Activated B cell treated with CpG ODN at 0.5 μM for 24 hours (primary cell): ENCODE measurements at regions of chr1 and their contacts with region 1.

Region 1: DNA sequence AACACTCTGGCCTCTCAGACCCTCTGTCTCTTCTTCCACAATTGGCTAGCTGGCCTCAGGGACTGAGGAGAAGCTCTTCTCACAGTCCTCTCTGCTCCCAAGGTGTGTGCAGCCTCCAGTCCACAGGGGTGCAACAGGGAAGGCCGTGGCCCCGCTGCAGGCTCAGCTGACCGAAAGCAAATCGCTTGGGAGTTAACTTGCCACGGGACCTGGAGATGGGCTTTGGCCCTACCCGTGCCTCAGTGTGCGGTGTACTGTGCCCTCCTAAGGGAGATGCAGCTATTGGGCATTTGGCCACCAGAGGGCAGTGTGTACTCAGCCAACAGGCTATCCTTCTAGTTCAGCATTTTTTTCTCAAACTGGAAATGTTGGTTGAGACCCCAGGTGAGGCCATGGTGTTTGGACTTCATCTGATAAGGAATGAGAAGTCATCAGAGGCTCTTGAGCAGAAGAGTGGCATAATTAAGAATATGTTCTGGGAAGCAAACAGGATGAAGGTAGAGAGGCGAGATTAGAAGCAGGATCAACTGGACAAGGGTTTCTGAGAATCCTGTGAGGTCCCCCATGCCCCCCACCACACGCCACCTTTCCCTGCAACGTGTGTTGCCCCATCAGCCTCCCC is 42.5 kb upstream of the TMEM125 start:
- DNase-seq: peak; percentile 76
- ATAC-seq: peak; percentile 96
- H3K4me3 Mint-ChIP-seq: no peak overlapping the region
- H3K27ac Mint-ChIP-seq: no peak overlapping the region
- H3K4me1 Mint-ChIP-seq: peaks cover 12% of the 10 kb centered on the region
- H3K27me3 Mint-ChIP-seq: no peaks in the 10 kb centered on the region
- CTCF ChIP-seq: peak; percentile 47

Region 2: DNA sequence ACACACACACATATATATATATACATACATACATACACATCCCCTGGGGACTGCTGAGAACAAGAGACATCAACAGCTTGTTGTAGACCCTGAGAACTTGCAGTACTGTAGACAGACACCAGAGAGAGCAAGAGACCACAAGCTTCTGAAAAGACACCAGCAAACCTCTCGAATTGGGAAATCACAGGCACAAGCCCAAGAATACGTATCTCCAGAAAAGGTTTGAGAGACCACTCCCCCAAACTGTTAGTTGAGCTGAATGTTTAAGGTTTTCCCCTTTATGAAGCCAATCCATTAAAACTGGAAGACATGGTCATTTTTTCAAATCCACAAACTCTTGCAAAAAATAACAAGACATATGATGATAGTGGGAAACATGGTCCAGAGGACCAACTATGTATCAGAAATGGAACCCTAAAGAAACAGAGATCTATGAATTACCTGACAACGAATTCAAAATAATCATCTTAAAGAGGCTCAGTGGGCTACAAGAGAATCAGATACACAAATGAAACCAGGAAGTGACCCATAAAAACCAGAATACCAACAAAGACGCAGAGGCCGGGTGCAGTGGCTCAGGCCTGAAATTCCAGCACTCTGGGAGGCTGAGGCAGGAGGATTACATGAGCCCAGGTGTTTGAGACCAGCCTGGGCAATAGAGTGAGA is 313.7 kb before region 1 on chr1:
- CTCF ChIA-PET with region 1: interaction called, 10 read pairs
- POLR2A ChIA-PET with region 1: no interaction called
- intact Hi-C with region 1: no loop called
- DNase-seq: no peak
- ATAC-seq: peak; percentile 99
- H3K4me3 Mint-ChIP-seq: no peak overlapping the region
- H3K27ac Mint-ChIP-seq: no peak overlapping the region
- H3K4me1 Mint-ChIP-seq: peaks cover 6% of the 10 kb centered on the region
- H3K27me3 Mint-ChIP-seq: no peaks in the 10 kb centered on the region
- CTCF ChIP-seq: peak; percentile 55

Region 3: DNA sequence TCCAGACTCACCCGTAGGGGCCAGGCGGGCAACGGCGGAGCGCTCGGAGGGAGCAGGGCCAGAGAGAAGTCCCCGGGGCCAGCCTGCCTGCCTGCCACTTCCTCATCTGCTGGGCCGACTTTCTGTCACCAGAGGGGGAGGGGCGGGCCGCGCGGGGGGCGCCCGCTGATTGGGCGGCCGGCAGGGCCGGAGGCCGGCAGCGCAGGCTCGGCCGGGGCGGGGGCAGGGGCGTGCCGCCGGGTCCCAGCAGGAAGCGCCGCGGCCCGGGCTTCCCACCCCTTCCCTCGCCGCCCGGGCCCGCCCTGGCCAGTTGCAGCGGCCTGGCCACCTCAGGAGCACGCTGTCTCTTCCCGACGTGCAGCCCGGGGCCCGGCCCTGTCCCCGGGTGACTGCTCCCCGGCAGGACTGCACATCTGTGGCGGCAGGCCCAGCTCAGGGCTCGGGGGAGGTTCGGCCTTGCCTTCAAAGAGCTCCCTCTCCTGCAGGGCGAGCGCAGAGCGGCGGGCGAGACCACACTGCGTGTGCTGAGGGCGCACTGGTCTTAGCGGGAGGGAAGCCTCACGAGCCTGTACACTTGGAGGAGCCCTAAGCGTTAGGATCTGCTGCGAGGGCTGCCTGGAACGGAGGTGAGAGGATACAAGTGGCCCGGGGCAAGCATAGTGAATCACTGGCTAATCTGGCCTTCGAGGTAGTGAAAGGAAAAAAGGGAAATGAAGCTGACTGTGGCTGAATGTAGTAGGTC is 140.8 kb after region 1 on chr1 and contains the start of gene ELOVL1:
- CTCF ChIA-PET with region 1: interaction called, 7 read pairs
- POLR2A ChIA-PET with region 1: interaction called, 6 read pairs
- intact Hi-C with region 1: loop called (anchors 1 kb)
- DNase-seq: peak; percentile 92
- ATAC-seq: peak; percentile 87
- H3K4me3 Mint-ChIP-seq: peak within 1 kb of the TSS; percentile 93
- H3K27ac Mint-ChIP-seq: peak within 1 kb of the TSS; percentile 97
- H3K4me1 Mint-ChIP-seq: peaks cover 42% of the 10 kb centered on the region
- H3K27me3 Mint-ChIP-seq: no peaks in the 10 kb centered on the region
- CTCF ChIP-seq: no peak
- total RNA-seq, gene ELOVL1: 80.2 and 84.2 TPM in 2 replicates

Region 4: DNA sequence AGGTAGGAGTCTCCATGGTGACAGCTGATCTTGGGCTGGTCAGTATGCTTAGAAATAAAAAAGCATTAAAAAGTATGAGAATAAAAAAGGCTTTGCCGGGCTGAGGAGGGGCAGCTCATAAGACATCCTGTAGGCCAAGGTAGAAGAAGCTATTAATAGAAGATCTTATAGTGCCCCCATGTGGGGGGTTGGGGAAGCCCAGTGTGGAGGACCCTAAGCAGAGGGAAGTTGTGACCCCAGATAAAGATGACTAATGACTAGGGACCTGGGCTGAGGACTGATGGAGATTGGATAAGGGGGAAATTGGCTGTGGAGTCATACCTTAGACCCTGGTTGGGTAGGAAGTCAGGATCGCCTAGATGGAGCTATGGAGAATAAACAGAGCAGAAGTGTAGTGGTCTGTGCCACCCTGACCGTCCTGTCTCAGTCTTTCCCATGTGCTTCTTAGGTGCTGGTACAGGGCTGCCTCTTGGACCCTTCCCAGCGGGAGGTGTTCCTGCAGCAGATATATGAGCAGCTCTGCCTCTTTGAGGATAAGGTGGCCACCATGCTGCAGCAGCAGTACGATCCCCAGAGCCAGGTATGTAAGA is 187.5 kb after region 1 on chr1:
- CTCF ChIA-PET with region 1: interaction called, 147 read pairs
- POLR2A ChIA-PET with region 1: interaction called, 14 read pairs
- intact Hi-C with region 1: loop called (anchors 1 kb)
- DNase-seq: peak; percentile 31
- ATAC-seq: peak; percentile 96
- H3K4me3 Mint-ChIP-seq: no peak overlapping the region
- H3K27ac Mint-ChIP-seq: no peak overlapping the region
- H3K4me1 Mint-ChIP-seq: no peaks in the 10 kb centered on the region
- H3K27me3 Mint-ChIP-seq: no peaks in the 10 kb centered on the region
- CTCF ChIP-seq: peak; percentile 19

Region 5: GRCh38 chr1:43650310-43651085 is 423.2 kb after region 1 on chr1:
- CTCF ChIA-PET with region 1: interaction called, 7 read pairs
- POLR2A ChIA-PET with region 1: interaction called, 3 read pairs
- intact Hi-C with region 1: loop called (anchors 5 kb)
- DNase-seq: peak; percentile 82
- ATAC-seq: peak; percentile 75
- H3K4me3 Mint-ChIP-seq: peak overlapping the region; percentile 98
- H3K27ac Mint-ChIP-seq: peak overlapping the region; percentile 97
- H3K4me1 Mint-ChIP-seq: peaks cover 46% of the 10 kb centered on the region
- H3K27me3 Mint-ChIP-seq: peaks cover 2% of the 10 kb centered on the region
- CTCF ChIP-seq: no peak

Region 6: GRCh38 chr1:43763497-43763973 is 536.3 kb after region 1 on chr1:
- CTCF ChIA-PET with region 1: interaction called, 3 read pairs
- POLR2A ChIA-PET with region 1: no interaction called
- intact Hi-C with region 1: loop called (anchors 5 kb)
- DNase-seq: peak; percentile 18
- ATAC-seq: peak; percentile 70
- H3K4me3 Mint-ChIP-seq: no peak overlapping the region
- H3K27ac Mint-ChIP-seq: no peak overlapping the region
- H3K4me1 Mint-ChIP-seq: peaks cover 3% of the 10 kb centered on the region
- H3K27me3 Mint-ChIP-seq: no peaks in the 10 kb centered on the region
- CTCF ChIP-seq: peak; percentile 36

Region 7: DNA sequence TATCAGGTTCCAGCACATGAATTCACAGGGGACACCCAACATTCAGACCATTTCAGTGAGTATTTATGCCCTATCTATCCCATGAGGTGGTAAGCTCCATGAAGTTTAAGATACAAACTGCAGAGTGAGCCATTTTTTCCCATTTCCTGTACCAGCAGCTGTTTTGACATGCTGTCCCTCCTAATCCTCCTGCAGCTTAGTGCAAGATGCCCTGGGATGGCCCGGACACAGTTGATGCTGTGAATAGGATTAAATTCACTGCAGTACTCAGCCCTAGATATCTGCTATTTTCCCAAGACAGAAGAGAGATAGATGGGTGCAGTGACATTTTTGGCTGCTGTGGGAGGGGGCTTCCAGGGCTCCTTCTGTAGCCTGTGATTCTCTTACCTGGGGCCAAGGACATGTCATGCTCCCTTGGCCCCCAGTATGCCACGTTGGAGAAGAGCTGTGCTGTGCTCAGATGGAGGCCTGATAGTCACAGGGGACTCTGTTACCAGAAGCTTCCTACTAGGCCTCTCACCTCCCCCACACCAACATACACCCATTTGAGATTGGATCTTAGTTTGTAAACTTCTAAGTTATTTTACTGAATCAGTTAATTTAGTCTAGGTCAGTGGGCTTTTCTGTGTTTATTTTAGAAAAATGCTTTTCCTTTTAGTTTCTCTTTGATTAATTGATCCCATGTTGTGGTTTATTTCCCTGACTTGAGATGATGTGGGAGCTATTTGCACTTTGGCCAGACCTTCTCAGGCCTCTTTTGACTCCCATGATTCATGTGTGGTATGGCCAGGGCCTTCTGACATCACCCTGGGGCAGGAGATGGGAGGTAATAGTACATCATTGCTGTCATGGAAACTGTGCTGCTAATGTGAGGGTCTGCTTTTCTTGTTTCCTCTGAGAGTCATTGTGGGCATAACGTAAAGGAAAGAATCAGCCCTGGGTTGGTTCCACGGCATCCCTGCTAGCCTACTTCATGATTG is 572.7 kb after region 1 on chr1:
- CTCF ChIA-PET with region 1: no interaction called
- POLR2A ChIA-PET with region 1: no interaction called
- intact Hi-C with region 1: no loop called
- DNase-seq: no peak
- ATAC-seq: no peak
- H3K4me3 Mint-ChIP-seq: no peak overlapping the region
- H3K27ac Mint-ChIP-seq: no peak overlapping the region
- H3K4me1 Mint-ChIP-seq: no peaks in the 10 kb centered on the region
- H3K27me3 Mint-ChIP-seq: no peaks in the 10 kb centered on the region
- CTCF ChIP-seq: no peak

Region 8: DNA sequence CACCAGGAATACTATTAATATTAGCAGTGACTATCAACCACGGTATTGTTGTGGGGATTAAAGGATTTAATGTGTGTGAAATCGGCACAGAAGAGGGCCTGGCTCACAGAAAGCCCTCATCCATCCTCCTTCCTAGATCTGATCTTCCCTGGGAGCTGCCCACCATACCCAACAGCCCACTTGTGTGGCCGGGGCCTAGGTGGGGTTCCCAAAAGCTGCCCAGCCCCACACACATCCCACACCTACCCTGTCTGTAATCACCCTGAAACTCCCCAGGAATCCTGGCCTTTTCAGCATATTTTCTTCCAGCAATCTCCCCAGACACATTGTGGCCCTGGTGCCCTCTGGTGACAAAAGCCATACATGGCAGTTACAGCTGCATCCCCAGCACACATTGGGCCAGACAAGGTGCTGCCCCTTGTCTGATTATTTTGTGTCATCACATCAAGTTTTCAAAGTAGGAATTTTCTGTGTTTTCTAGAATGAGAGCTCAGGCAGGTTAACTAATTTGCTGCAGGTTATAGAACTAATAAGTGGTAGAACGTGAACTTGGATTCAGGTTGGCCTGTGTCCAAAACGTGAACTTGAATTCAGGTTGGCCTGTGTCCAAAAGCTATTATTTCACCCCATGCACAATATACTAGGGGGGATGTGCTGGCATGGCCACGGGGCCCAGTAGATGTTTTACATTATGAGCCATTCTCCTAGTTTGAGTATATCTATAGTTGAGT is 809.3 kb after region 1 on chr1:
- CTCF ChIA-PET with region 1: no interaction called
- POLR2A ChIA-PET with region 1: no interaction called
- intact Hi-C with region 1: loop called (anchors 2 kb)
- DNase-seq: peak; percentile 50
- ATAC-seq: peak; percentile 92
- H3K4me3 Mint-ChIP-seq: no peak overlapping the region
- H3K27ac Mint-ChIP-seq: no peak overlapping the region
- H3K4me1 Mint-ChIP-seq: peaks cover 6% of the 10 kb centered on the region
- H3K27me3 Mint-ChIP-seq: no peaks in the 10 kb centered on the region
- CTCF ChIP-seq: no peak